A549 (cell line): ENCODE measurements at regions of chr17 and their contacts with region 1.

Region 1: DNA sequence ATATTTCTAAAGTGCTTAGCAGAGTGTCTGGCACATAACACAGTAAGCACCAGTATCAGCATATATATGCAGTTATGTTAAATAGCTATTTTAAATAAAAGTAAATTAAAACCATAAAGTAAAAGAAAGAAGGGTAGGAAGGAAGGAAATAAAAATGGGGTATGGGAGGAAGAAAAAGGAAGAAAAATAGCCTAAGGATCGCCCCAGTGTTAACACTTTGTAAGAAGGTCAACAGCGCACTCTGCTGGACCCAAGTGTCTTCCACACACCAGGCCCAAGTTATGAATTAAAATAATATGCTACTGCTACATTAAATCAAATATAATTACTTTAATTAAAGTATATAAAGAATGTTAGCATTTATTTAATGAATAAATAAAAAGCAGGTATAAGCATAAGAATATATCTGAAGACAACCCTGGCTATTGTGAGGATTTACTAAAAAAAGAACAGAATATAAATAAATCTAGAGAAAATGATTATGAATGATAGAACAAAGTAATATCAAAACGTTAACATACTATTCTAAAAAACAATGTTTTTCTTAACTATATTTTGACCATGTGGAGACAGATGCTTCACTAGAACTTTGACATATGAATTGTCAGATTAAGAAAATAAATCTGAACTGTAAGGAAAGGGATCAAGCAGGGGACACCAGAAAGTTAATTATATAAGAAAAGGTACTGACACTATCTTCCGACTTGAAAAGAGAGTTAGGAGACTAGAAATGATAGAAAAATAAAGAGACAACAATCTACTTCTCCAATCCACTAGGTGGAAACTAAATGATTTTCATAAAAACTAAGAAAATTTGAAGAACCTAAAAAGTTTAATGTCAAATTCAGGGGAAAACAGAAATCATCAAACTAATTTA is 25.9 kb downstream of the BRIP1 start:
- DNase-seq: peak; percentile 58 to 80
- ATAC-seq: peak; percentile 82 to 92; a peak in 4 of 6 replicates
- H3K4me3 ChIP-seq: no peak overlapping the region
- H3K27ac ChIP-seq: no peak overlapping the region
- H3K4me1 ChIP-seq: peaks cover 23% of the 10 kb centered on the region
- CTCF ChIP-seq: peak; percentile 99
- EP300 ChIP-seq: no peak
- POLR2A ChIP-seq: no peak
- RAD21 ChIP-seq: peak; percentile 92 to 97

Region 2: GRCh38 chr17:61574542-61575174 is 262.8 kb before region 1 on chr17:
- CTCF ChIA-PET with region 1: interaction called, 12 read pairs
- POLR2A ChIA-PET with region 1: no interaction called
- DNase-seq: peak; percentile 80 to 88
- ATAC-seq: peak; percentile 98 to 99
- H3K4me3 ChIP-seq: no peak overlapping the region
- H3K27ac ChIP-seq: peak overlapping the region; percentile 57 to 72
- H3K4me1 ChIP-seq: peaks cover 16% of the 10 kb centered on the region
- CTCF ChIP-seq: peak; percentile 89
- EP300 ChIP-seq: no peak
- POLR2A ChIP-seq: no peak
- RAD21 ChIP-seq: peak; percentile 98

Region 3: GRCh38 chr17:61635913-61636432 is 201.4 kb before region 1 on chr17:
- CTCF ChIA-PET with region 1: interaction called, 23 read pairs
- POLR2A ChIA-PET with region 1: no interaction called
- DNase-seq: peak in 1 of 2 experiments; percentile 66
- ATAC-seq: peak in 1 of 2 experiments; percentile 68; a peak in 3 of 6 replicates
- H3K4me3 ChIP-seq: no peak overlapping the region
- H3K27ac ChIP-seq: no peak overlapping the region
- H3K4me1 ChIP-seq: no peaks in the 10 kb centered on the region
- CTCF ChIP-seq: peak; percentile 91
- EP300 ChIP-seq: no peak
- POLR2A ChIP-seq: no peak
- RAD21 ChIP-seq: peak; percentile 88 to 98

Region 4: DNA sequence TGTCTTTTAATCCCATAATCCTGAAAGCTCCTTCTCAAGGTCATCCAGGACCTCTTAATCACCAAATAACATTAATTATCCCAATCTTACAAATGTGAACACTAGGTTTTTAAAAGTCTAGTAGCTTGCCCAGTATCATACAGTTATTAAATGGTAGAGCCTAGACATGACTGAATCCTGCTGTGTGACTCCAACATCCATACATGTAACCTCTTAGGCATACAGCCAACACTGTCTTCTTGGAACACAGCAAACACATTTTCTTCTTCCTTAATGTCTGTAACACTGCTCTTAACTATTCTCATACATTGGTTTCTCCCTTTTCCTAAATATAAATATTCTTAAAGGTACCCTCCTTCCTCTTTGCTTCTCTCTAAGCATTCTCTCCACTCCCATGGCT is 12.3 kb after region 1 on chr17:
- CTCF ChIA-PET with region 1: interaction called, 12 read pairs
- POLR2A ChIA-PET with region 1: no interaction called
- DNase-seq: no peak
- ATAC-seq: no peak
- H3K4me3 ChIP-seq: no peak overlapping the region
- H3K27ac ChIP-seq: no peak overlapping the region
- H3K4me1 ChIP-seq: no peaks in the 10 kb centered on the region
- CTCF ChIP-seq: no peak
- EP300 ChIP-seq: no peak
- POLR2A ChIP-seq: no peak
- RAD21 ChIP-seq: no peak